Ascending aorta (tissue), 2 donors: ENCODE measurements at regions of chr14 and their contacts with region 1.

Region 1: GRCh38 chr14:35341446-35342159 is 49.4 kb downstream of the PSMA6 start:
- DNase-seq: peak; percentile 97 to 99
- H3K4me3 ChIP-seq: peak overlapping the region; percentile 48 to 58
- H3K27ac ChIP-seq: peak overlapping the region; percentile 95 to 97
- H3K4me1 ChIP-seq: peaks cover 11 to 33% of the 10 kb centered on the region in 2 donors
- H3K27me3 ChIP-seq: no peaks in the 10 kb centered on the region
- CTCF ChIP-seq: no peak

Region 2: GRCh38 chr14:35292051-35292769 is 49.4 kb before region 1 on chr14 and contains the start of gene PSMA6:
- intact Hi-C with region 1: loop called (anchors 2 kb)
- DNase-seq: peak; percentile 96 to 99
- H3K4me3 ChIP-seq: peak within 1 kb of the TSS; percentile 80 to 87
- H3K27ac ChIP-seq: peak within 1 kb of the TSS; percentile 83 to 92
- H3K4me1 ChIP-seq: peaks cover 0 to 22% of the 10 kb centered on the region in 2 donors
- H3K27me3 ChIP-seq: no peaks in the 10 kb centered on the region
- CTCF ChIP-seq: no peak
- total RNA-seq, gene PSMA6: 96.6 TPM

Region 3: DNA sequence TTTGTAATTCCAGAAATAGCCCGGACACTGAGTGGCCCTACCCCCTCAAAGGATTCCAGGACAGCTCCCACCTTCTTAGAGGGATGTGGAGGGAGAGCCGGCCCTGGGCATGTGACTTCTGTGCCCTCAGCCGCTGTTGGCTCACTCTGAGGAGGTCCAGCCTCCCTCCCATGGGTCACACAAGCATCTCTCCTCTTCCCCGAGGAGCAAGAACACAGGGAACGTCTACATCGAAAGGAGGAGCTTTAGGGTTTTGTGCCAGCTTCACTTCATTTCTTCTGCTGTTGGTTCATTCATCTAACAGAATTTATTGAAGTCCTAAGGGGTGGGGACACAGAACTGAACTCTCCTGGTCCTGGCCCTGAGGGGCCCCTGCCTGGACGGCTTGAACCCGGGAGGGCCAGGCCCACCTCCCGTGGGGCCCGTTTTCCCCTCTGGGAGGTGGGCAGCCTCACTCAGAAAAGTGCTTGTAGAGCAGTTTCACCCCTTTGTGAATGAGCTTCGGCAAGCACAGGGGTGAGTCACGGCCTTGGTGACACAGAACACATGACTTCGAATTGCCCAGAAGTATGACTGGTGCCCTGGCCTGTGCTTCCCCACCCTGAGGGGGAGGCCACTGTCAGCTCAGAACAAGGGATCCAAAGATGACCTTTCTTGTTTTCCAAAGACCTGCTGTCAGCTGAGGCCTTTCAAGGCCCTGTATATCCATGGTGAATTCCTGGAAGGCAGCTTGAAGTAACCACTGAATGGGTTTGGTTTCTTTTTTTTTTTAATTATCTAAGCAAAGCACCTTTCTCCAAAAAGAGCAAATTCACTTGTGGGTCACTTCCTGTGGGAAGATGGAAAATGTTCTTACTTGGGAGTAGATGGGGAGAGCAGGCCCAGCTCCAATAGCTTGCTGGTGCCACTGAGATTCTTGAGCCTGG is 23.8 kb after region 1 on chr14:
- intact Hi-C with region 1: loop called (anchors 1 kb)
- DNase-seq: peak; percentile 87 to 95
- H3K4me3 ChIP-seq: no peak overlapping the region
- H3K27ac ChIP-seq: peak overlapping the region; percentile 89 to 94
- H3K4me1 ChIP-seq: peaks cover 14 to 21% of the 10 kb centered on the region in 2 donors
- H3K27me3 ChIP-seq: no peaks in the 10 kb centered on the region
- CTCF ChIP-seq: no peak

Region 4: DNA sequence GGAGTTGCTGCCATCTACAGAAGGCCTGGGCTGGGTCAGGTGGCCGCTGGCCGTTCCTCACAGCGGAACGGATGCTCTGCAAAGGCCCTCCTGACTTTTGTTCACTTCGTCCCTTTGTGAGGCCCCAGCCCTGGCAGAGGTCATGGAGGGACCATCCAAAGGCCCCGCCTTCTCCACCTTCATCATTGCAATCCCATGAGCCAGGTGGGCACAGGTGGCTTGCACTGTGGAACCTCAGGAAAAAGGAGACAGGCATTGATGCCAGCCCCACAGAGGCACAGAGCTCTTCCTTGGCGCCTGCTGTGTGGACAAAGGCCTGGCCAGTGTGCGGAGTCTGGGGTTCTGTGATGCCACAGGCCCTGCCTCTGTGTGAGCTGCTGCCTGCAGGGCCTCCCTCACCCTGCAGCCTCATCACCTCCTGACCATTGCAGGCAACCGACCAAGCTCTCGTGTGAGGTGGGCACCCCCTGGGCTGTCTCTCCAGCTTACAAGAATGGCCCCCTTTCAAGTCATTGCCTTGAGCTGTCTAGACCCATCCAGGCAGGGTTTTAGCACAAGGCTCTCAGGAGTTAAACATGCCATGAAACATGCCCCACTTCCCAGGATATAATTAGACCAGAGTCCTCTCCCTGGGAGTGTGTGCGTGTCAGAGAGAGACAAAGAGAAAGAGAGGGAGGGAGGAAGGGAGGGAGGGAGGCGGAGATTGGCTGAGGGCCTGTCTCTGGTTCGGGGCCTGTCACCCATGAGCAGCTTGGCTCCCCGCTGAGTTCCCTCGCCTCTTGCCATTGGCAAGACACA is 43.6 kb after region 1 on chr14:
- intact Hi-C with region 1: loop called (anchors 1 kb)
- DNase-seq: peak; percentile 45 to 90
- H3K4me3 ChIP-seq: peak overlapping the region in 1 of 2 donors; percentile 8
- H3K27ac ChIP-seq: peak overlapping the region; percentile 87 to 93
- H3K4me1 ChIP-seq: peaks cover 19 to 25% of the 10 kb centered on the region in 2 donors
- H3K27me3 ChIP-seq: no peaks in the 10 kb centered on the region
- CTCF ChIP-seq: no peak

Region 5: DNA sequence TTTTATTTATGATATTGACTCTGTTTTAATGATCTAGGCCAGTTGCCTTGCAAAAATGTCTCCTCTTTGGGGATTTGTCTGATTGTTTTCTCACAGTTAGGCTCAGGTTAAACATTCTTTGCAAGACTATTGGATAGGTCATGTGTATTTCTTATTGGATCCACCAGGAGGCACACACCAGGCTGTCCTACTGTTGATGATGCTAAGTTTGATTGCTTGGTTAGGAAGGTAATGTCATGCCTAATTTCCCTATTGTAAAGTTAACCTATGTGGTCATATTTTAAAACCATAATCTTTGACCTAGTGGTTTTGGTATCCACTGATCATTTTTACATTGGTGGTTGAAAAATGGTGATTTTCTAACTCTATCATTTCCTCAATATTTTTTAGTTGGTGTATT is 621.6 kb after region 1 on chr14:
- intact Hi-C with region 1: no loop called
- DNase-seq: no peak
- H3K4me3 ChIP-seq: no peak overlapping the region
- H3K27ac ChIP-seq: no peak overlapping the region
- H3K4me1 ChIP-seq: no peaks in the 10 kb centered on the region
- H3K27me3 ChIP-seq: no peaks in the 10 kb centered on the region
- CTCF ChIP-seq: no peak